Right ventricle myocardium inferior (tissue), 1 donor: ENCODE measurements at regions of chr22 and their contacts with region 1.

Region 1: GRCh38 chr22:31119026-31119717 is 3.6 kb upstream of the INPP5J start:
- DNase-seq: no peak
- ATAC-seq: peak; percentile 83

Region 2: DNA sequence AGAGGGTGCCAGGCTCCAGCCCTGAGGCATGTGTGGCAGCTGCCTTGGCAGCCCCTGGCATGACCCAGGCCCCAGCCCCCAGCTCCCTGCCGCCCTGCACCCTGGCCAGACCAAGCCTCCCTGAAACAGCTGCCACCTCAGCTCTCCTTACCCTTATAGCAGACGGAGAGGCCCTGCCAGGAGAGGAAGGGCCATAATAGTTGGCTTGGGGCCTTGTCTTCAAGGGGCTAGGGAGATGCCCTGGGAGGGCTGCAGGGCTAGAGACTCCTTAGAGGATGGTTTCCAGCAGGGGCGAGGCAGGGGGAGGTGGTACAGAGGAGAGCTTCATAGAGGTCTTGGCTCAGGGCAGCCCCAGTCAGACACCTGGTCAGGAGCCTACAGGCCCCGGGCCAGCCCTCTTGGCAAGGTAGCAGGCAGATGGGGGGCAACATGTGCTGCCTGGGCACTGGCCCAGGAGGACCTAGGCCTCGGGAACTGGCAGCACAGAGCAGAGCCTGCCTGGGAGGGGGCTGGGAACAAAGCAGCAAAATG is 25.1 kb before region 1 on chr22:
- intact Hi-C with region 1: loop called (anchors 2 kb)
- DNase-seq: peak; percentile 85
- ATAC-seq: peak; percentile 71

Region 3: GRCh38 chr22:31185056-31185455 is 65.9 kb after region 1 on chr22:
- intact Hi-C with region 1: no loop called
- DNase-seq: no peak
- ATAC-seq: no peak